ENCODE measurements at regions of chr19 and their contacts with region 1.

Region 1: GRCh38 chr19:10653715-10654492 is at the start of gene ILF3:
- DNase-seq: peak; percentile 100
- H3K4me3 Mint-ChIP-seq: peak within 1 kb of the TSS; percentile 92
- H3K27ac Mint-ChIP-seq: peak within 1 kb of the TSS; percentile 96
- H3K4me1 Mint-ChIP-seq: peaks cover 29% of the 10 kb centered on the region
- H3K27me3 Mint-ChIP-seq: peaks cover 6% of the 10 kb centered on the region
- total RNA-seq, gene ILF3: 536 and 558 TPM in 2 replicates

Region 2: GRCh38 chr19:10106100-10106936 is 547.6 kb before region 1 on chr19 and contains the start of gene PPAN:
- intact Hi-C with region 1: loop called (anchors 10 kb)
- DNase-seq: peak; percentile 97
- H3K4me3 Mint-ChIP-seq: peak within 1 kb of the TSS; percentile 97
- H3K27ac Mint-ChIP-seq: peak within 1 kb of the TSS; percentile 99
- H3K4me1 Mint-ChIP-seq: peaks cover 60% of the 10 kb centered on the region
- H3K27me3 Mint-ChIP-seq: peaks cover 1% of the 10 kb centered on the region
- total RNA-seq, gene PPAN: 234 and 250 TPM in 2 replicates

Region 3: GRCh38 chr19:10403137-10404021 is 250.5 kb before region 1 on chr19 and contains the start of gene CDC37:
- intact Hi-C with region 1: loop called (anchors 2 kb)
- DNase-seq: peak; percentile 98
- H3K4me3 Mint-ChIP-seq: peak within 1 kb of the TSS; percentile 94
- H3K27ac Mint-ChIP-seq: peak within 1 kb of the TSS; percentile 96
- H3K4me1 Mint-ChIP-seq: peaks cover 51% of the 10 kb centered on the region
- H3K27me3 Mint-ChIP-seq: no peaks in the 10 kb centered on the region
- total RNA-seq, gene CDC37: 320 and 326 TPM in 2 replicates

Region 4: DNA sequence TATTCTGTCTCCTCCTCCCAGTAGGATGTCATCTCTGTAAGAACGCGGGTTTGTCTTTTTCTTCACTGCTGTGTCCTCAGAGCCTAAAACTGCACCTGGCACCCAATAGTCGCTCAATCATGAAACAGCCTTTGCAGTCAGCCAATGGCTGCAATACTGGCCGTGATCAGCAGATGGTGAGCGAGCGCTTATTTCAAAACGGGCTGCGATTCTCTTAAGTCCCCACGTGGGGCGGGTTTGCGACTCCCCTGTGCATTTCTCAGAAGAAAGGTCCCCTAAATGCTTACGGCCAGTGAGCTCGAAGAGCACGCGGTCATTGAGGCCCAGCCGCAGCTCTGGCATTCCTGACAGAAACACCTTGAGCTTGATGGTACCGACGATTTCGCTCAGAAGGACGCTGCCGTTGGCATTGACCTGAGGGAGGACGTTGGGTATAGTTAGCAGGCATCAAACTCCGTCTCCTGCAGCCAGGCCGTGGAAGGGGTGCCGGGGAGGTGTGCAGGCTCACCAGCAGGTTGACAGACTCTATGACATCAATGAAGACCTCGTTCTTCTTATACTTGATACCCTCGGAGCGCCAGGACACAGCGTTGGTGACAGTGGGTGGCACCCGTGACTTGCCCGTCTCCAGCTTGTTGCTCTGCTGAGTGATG is 72.8 kb before region 1 on chr19:
- intact Hi-C with region 1: loop called (anchors 2 kb)
- DNase-seq: peak; percentile 81
- H3K4me3 Mint-ChIP-seq: no peak overlapping the region
- H3K27ac Mint-ChIP-seq: no peak overlapping the region
- H3K4me1 Mint-ChIP-seq: peaks cover 12% of the 10 kb centered on the region
- H3K27me3 Mint-ChIP-seq: peaks cover 6% of the 10 kb centered on the region

Region 5: GRCh38 chr19:10717356-10718204 is 63.7 kb after region 1 on chr19 and contains the start of gene DNM2:
- intact Hi-C with region 1: loop called (anchors 1 kb)
- DNase-seq: peak; percentile 99
- H3K4me3 Mint-ChIP-seq: peak within 1 kb of the TSS; percentile 98
- H3K27ac Mint-ChIP-seq: peak within 1 kb of the TSS; percentile 88
- H3K4me1 Mint-ChIP-seq: peaks cover 29% of the 10 kb centered on the region
- H3K27me3 Mint-ChIP-seq: no peaks in the 10 kb centered on the region
- total RNA-seq, gene DNM2: 236 and 240 TPM in 2 replicates

Region 6: DNA sequence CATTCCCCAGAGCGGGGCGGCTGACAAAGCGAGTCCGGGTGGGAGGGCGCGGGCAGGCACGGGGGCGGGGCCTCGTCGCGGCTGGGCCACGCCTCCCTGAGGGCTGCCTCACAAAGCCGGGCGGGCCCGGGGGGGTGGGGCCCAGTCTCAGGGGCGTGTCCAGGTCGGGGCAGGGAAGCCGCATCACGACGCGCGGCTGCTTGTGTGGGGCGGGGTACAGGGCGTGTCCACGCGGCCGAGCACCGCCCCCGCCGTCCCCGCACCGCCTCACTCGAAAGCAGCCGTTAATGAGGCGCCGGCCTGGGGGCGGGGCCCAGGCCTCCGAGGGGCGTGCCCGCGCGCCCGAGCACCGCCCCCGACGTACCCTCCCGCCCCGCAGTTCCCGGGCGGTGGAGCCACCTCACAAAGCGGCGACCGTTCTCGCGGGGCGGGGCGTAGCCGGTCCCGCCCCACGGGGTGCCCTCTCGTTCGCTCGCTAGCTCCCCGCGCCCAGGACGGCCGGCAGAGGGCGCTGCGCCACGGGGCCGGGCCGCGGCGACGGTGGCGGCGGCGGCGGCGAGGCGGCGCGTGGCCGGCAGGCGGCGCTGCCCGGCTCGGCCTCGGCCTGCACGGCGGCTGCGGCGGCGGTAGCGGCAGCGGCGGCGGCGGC is 217.2 kb after region 1 on chr19 and contains the start of gene CARM1:
- intact Hi-C with region 1: loop called (anchors 2 kb)
- DNase-seq: peak; percentile 98
- H3K4me3 Mint-ChIP-seq: peak within 1 kb of the TSS; percentile 88
- H3K27ac Mint-ChIP-seq: peak within 1 kb of the TSS; percentile 93
- H3K4me1 Mint-ChIP-seq: peaks cover 37% of the 10 kb centered on the region
- H3K27me3 Mint-ChIP-seq: no peaks in the 10 kb centered on the region
- total RNA-seq, gene CARM1: 85.9 and 88.0 TPM in 2 replicates

Measured in activated T-helper 1 cell treated with anti-CD3 and anti-CD28 coated beads, Interleukin-12 subunit alpha, Interleukin-12 subunit beta, Interleukin-2, Interleukin-4 antibody, amounts not matched to agents 30 ng/mL and 10 ng/mL and 1 ng/mL, durations not matched to agents 14 hours and 24 hours and 36 hours (primary cell).